Heart right ventricle (tissue), 16 donors: ENCODE measurements at regions of chr5 and their contacts with region 1.

Region 1: DNA sequence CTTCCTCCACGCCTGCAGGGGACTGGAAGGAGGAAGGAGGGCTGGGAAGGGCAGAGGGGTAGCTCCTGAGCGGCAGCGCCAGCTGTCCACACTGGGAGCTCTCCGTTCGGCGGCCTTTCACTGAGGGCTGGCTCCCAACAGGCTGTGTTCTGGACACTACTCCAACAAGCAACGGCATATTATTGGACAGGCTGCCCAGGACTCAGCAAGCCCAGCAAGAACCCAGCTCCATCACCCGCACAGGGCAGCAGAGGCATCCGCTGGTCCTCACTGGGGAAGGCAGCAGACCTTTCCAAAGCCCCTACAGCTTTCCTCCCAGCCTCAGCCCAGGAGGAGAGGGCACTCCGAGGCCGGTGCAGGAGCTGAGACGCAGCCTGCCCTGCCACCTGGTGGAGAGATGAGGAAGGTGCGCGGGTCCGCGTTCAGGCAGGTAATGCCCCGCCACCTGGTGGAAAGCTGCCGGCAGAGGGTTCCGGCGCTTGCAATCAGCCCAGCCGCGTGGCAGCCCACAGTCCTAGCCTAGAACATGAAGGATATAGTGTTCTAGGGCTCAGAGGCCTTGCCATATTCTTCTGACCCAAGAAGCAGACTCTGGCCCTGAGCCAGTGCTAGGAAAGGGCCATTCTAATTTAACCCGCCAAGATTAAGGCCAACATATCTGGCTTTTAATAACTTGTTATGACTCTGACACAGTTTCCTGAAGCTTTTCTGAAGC is 74.4 kb downstream of the NRG2 start:
- DNase-seq: peak; percentile 83 to 87
- ATAC-seq: peak; percentile 94 to 97 (median 96)
- H3K4me3 ChIP-seq: peak overlapping the region in 1 of 10 donors; percentile 13
- H3K27ac ChIP-seq: peak overlapping the region in 1 of 10 donors; percentile 24
- H3K4me1 ChIP-seq: peaks cover 8 to 48% (median 18%) of the 10 kb centered on the region in 9 donors
- H3K27me3 ChIP-seq: no peaks in the 10 kb centered on the region
- CTCF ChIP-seq: peak; percentile 95 to 100 (median 99)

Region 2: GRCh38 chr5:139696894-139697658 is 271.6 kb before region 1 on chr5:
- intact Hi-C with region 1: loop called in 1 of 10 experiments (anchors 10 kb)
- DNase-seq: peak; percentile 85 to 87
- ATAC-seq: peak; percentile 79 to 90 (median 83)
- H3K4me3 ChIP-seq: peak overlapping the region; percentile 20 to 63 (median 45)
- H3K27ac ChIP-seq: peak overlapping the region; percentile 87 to 98 (median 90)
- H3K4me1 ChIP-seq: peaks cover 15 to 78% (median 51%) of the 10 kb centered on the region in 9 donors
- H3K27me3 ChIP-seq: peaks cover 0 to 36% (median 0%) of the 10 kb centered on the region in 7 donors
- CTCF ChIP-seq: no peak

Region 3: DNA sequence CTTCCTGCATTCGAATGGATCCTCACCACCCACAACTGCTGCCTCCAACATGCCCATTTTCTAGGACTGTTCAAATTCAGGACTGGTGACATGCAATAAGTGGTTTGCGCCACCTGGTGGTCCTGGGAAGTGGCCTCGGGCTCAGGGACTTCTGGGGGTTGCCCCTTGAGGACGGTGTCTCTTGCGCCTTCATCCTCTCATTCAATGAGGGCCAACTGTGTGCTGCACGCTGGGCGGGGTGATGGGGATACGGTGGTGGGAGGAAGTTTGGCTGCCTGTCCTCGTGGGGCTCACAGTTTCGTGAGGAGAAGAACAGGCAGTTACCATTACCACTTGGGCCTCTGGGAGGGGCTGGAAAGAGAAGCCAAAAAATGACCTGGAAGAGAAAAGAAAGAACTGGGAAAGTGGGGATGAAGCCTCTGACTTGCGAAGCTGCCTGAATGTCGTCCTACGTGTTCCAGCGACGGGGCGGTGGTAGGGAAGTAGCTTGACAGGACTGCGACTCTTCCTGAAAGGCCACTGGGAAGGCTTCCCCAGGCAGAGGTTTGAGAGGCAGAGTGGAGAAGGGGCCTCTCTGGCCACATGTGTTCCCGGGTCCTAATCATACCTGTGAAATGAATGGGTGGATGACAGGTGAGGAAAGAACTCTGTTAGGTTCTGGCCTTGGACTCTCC is 124.1 kb before region 1 on chr5:
- intact Hi-C with region 1: loop called in 1 of 10 experiments (anchors 5 kb)
- DNase-seq: peak; percentile 66 to 69
- ATAC-seq: peak in 4 of 8 donors; percentile 29 to 37 (median 35)
- H3K4me3 ChIP-seq: no peak overlapping the region
- H3K27ac ChIP-seq: no peak overlapping the region
- H3K4me1 ChIP-seq: peaks cover 3 to 25% (median 17%) of the 10 kb centered on the region in 9 donors
- H3K27me3 ChIP-seq: peaks cover 0 to 44% (median 0%) of the 10 kb centered on the region in 7 donors
- CTCF ChIP-seq: peak; percentile 38 to 76 (median 69)

Region 4: DNA sequence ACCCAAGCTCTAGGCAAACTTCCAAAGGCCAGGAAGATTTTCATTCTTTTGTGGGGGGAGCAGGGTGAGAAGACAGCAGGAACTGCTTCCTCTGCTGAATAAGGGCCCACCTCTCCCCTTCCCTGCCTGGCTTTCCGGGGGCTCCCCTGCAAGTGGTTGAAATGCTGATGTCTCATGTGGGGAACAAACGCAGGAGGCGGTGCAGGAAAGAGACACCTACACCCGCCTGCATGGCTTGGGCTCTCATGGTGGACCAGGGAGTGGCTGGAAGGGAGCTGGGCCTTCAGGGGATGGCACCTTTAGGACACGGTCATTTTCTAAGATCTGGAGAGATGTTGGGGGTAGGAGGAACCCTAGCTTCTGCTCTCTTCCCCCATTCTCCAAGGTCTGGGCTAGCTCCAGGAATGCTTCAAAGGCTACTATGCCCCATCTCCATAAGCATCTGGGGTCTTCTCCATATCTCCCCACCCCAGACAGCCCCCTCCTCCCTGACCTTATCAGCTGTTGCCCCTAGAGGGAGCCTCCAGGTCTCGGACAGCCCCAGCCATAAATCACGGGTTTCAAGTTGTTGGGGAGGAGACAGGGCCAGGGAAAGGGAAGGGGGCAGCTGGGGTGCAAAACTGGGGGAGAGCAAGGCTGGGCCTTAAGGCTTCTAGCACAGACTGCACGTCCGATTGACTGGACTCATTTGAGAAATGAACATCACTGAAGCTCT is 96.5 kb before region 1 on chr5:
- intact Hi-C with region 1: loop called in 4 of 10 experiments (anchors 5 to 10 kb)
- DNase-seq: no peak
- ATAC-seq: no peak
- H3K4me3 ChIP-seq: no peak overlapping the region
- H3K27ac ChIP-seq: no peak overlapping the region
- H3K4me1 ChIP-seq: peaks cover 0 to 19% (median 0%) of the 10 kb centered on the region in 9 donors
- H3K27me3 ChIP-seq: no peaks in the 10 kb centered on the region
- CTCF ChIP-seq: peak in 1 of 9 donors; percentile 10

Region 5: GRCh38 chr5:140000332-140000731 is 31.6 kb after region 1 on chr5:
- intact Hi-C with region 1: no loop called
- DNase-seq: peak; percentile 33 to 72
- ATAC-seq: peak; percentile 60 to 92 (median 84)
- H3K4me3 ChIP-seq: peak overlapping the region in 3 of 10 donors; percentile 0 to 17 (median 6)
- H3K27ac ChIP-seq: peak overlapping the region; percentile 26 to 81 (median 64)
- H3K4me1 ChIP-seq: peaks cover 0 to 47% (median 11%) of the 10 kb centered on the region in 9 donors
- H3K27me3 ChIP-seq: peaks cover 0 to 23% (median 0%) of the 10 kb centered on the region in 7 donors
- CTCF ChIP-seq: no peak

Region 6: DNA sequence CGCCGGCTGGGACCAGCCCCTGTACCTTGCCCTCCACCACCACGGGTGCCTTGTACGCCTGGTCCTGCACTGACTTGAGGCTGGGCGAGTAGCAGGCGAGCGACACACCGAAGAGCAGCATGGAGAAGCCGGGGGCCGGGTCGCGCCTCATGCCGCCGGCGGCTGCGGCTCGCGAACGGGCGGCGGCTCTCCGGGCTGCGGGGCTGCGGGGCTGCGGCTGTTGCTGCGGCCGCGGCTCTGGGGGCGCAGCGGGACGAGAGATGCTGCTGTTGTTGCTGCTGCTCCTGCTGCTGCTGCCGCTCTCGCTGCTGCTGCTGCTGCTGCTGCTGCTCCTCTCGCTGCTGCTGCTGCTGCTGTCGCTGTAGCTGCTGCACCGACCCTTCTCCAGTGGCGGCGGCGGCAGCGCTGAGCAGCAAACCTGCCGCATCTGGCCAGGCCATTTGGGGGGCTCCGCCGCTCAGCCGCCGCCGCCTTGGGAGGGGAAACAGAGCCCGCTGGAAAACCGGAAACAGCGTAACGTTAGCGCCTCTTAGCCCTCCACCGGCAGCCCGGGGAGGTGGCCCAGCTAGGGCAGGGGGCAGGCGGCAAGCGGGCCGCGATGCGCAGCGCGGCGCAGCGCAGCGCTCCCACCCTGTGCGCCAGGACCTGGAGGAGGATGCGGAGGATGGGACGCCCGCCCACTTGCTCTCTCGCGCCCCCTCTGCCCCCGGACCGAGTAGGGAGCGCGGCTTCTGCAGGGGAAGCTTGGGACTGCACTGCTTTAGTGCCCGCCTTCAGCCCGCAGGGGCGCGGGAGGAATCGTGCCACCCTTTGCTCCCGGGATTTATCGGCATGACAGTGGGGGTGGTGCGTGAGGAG is 74.2 kb after region 1 on chr5 and contains the start of gene NRG2:
- intact Hi-C with region 1: loop called in 3 of 10 experiments (anchors 5 to 10 kb)
- DNase-seq: peak; percentile 77 to 81
- ATAC-seq: peak; percentile 83 to 92 (median 90)
- H3K4me3 ChIP-seq: peak within 1 kb of the TSS; percentile 12 to 86 (median 70)
- H3K27ac ChIP-seq: peak within 1 kb of the TSS; percentile 46 to 89 (median 82)
- H3K4me1 ChIP-seq: peaks cover 0 to 53% (median 47%) of the 10 kb centered on the region in 9 donors
- H3K27me3 ChIP-seq: peaks cover 0 to 59% (median 0%) of the 10 kb centered on the region in 7 donors
- CTCF ChIP-seq: peak; percentile 48 to 74 (median 56)
- total RNA-seq, gene NRG2: 1.0 to 6.6 (median 2.9) TPM